Kidney (tissue), 22 donors: ENCODE measurements at regions of chr19 and their contacts with region 1.

Region 1: GRCh38 chr19:56671613-56671994 is at the start of gene ZNF835:
- DNase-seq: peak; percentile 92 to 97 (median 94)
- H3K4me3 ChIP-seq: peak within 1 kb of the TSS; percentile 85 to 97 (median 94)
- H3K27ac ChIP-seq: no peak within 1 kb of the TSS
- H3K4me1 ChIP-seq: peaks cover 0 to 14% (median 0%) of the 10 kb centered on the region in 3 donors
- H3K27me3 ChIP-seq: no peaks in the 10 kb centered on the region
- CTCF ChIP-seq: peak; percentile 15
- total RNA-seq, gene ZNF835: 5.3 TPM

Region 2: DNA sequence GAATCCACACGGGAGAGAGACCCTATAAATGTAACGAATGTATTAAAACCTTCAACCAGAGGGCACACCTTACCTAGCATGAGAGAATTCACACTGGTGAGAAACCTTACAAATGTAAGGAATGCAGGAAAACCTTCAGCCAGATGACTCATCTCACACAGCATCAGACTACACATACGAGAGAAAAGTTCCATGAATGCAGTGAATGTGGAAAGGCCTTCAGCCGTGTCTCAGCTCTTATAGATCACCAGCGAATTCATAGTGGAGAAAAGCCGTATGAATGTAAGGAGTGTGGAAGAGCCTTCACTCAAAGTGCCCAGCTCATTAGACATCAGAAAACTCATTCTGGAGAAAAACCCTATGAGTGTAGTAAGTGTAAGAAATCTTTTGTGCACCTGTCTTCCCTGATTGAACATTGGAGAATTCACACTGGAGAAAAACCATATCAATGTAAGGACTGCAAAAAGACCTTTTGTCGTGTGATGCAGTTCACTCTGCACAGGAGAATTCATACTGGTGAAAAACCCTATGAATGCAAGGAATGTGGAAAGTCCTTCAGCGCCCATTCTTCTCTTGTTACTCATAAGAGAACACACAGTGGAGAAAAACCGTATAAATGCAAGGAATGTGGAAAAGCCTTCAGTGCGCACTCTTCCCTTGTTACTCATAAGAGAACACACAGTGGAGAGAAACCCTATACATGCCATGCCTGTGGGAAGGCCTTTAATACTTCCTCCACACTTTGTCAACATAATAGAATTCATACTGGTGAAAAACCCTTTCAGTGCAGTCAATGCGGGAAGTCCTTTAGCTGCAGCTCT is 294.3 kb before region 1 on chr19:
- intact Hi-C with region 1: loop called (anchors 10 kb)
- DNase-seq: no peak
- H3K4me3 ChIP-seq: peak overlapping the region in 1 of 3 donors; percentile 13
- H3K27ac ChIP-seq: no peak overlapping the region
- H3K4me1 ChIP-seq: no peaks in the 10 kb centered on the region
- H3K27me3 ChIP-seq: no peaks in the 10 kb centered on the region
- CTCF ChIP-seq: no peak